Stomach (tissue), 19 donors: ENCODE measurements at regions of chr1 and their contacts with region 1.

Region 1: GRCh38 chr1:116139592-116140134 is 28.5 kb downstream of the MAB21L3 start:
- DNase-seq: no peak
- H3K4me3 ChIP-seq: no peak overlapping the region
- H3K27ac ChIP-seq: no peak overlapping the region
- H3K4me1 ChIP-seq: peaks cover 0 to 8% (median 2%) of the 10 kb centered on the region in 4 donors
- H3K27me3 ChIP-seq: no peaks in the 10 kb centered on the region
- CTCF ChIP-seq: no peak
- EP300 ChIP-seq: no peak
- POLR2A ChIP-seq: no peak

Region 2: DNA sequence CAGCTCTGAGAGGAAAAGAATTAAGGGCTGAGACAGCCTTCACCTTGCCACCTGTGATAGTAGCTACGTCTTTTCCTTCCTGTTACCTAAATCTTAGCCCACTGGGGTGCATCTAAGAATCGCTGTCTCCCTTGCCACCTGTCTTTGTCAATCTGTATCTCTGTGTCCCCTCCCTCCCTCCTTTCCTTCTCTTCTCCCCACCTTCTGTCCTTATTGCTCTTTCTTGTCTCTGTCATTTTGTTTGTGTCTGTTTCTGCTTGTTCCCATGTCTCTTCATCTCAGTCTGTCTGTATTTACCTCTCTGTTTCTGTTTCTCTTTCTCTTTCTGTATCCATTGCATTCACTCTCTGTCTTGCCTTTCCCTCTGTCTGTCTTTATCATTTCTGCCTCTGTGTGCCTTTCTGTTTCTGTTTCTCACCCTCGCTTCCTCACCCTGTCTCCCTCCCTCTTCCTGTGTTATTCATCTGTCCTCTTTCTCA is 133.1 kb before region 1 on chr1:
- intact Hi-C with region 1: no loop called
- DNase-seq: no peak
- H3K4me3 ChIP-seq: no peak overlapping the region
- H3K27ac ChIP-seq: peak overlapping the region in 1 of 5 donors; percentile 9
- H3K4me1 ChIP-seq: peaks cover 0 to 16% (median 13%) of the 10 kb centered on the region in 4 donors
- H3K27me3 ChIP-seq: no peaks in the 10 kb centered on the region
- CTCF ChIP-seq: no peak
- EP300 ChIP-seq: no peak
- POLR2A ChIP-seq: no peak

Region 3: DNA sequence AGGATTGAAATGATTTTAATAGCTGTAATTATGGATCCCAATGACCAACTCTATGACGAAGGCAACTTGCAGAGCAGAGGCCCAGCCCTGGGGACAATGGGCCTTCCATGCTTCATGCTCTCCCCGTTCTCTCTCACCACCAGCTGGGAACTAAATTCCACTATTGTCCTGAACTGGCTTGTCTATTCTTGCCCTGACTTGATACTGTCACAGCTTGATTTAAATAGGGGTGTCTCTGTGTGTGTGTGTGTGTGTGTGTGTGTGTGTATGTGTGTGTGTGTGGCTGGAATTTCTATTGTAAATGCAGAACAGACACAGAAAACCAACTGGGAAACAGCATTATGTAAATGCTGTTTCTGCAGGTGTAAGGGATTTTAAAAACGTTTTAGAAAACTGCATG is 106.3 kb before region 1 on chr1:
- intact Hi-C with region 1: no loop called
- DNase-seq: peak in 1 of 2 donors; percentile 20
- H3K4me3 ChIP-seq: no peak overlapping the region
- H3K27ac ChIP-seq: no peak overlapping the region
- H3K4me1 ChIP-seq: no peaks in the 10 kb centered on the region
- H3K27me3 ChIP-seq: no peaks in the 10 kb centered on the region
- CTCF ChIP-seq: no peak
- EP300 ChIP-seq: no peak
- POLR2A ChIP-seq: no peak

Region 4: GRCh38 chr1:116498789-116499628 is 359.3 kb after region 1 on chr1:
- intact Hi-C with region 1: loop called (anchors 5 kb)
- DNase-seq: peak in 1 of 2 donors; percentile 88
- H3K4me3 ChIP-seq: no peak overlapping the region
- H3K27ac ChIP-seq: no peak overlapping the region
- H3K4me1 ChIP-seq: peaks cover 17 to 57% (median 17%) of the 10 kb centered on the region in 4 donors
- H3K27me3 ChIP-seq: no peaks in the 10 kb centered on the region
- CTCF ChIP-seq: peak in 5 of 7 experiments; percentile 72 to 82 (median 78)
- EP300 ChIP-seq: no peak
- POLR2A ChIP-seq: no peak